ENCODE measurements at regions of chr11 and their contacts with region 1.

Region 1: GRCh38 chr11:9003573-9004309 is at the start of gene NRIP3:
- DNase-seq: peak; percentile 52 to 90 (median 78)
- ATAC-seq: peak; percentile 79 to 92 (median 83)
- H3K4me3 ChIP-seq: peak within 1 kb of the TSS; percentile 44 to 49
- H3K4me3 Mint-ChIP-seq: peak within 1 kb of the TSS; percentile 71 to 82 (median 79)
- H3K27ac ChIP-seq: no peak within 1 kb of the TSS
- H3K27ac Mint-ChIP-seq: no peak within 1 kb of the TSS
- H3K4me1 ChIP-seq: peaks cover 4 to 21% of the 10 kb centered on the region in 2 experiments
- H3K4me1 Mint-ChIP-seq: peaks cover 21 to 30% (median 24%) of the 10 kb centered on the region in 3 donors
- H3K27me3 ChIP-seq: peaks cover 0 to 29% of the 10 kb centered on the region in 2 experiments
- H3K27me3 Mint-ChIP-seq: peaks cover 31 to 35% of the 10 kb centered on the region in 2 donors
- total RNA-seq, gene NRIP3: 0.89 to 3.9 (median 1.6) TPM

Region 2: DNA sequence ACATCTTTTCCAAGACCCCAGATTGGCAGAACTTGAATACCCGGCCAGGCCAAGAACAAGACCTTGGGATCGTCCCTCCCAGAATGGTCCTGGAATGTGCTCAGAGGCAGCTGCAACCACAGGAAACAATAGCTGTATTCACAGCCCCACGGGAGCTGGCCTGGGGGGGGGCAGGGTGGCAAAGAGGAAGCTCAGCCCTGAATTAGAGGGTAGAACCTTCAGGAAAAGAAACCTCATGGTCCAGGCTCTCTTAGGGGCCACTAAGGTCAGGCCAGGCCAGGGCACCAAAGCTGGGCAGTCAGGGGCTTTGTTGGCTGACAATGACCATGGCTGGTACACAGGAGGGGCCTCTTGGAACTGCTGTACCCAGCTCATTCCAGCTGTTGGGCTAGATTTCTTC is 303.8 kb before region 1 on chr11:
- CTCF ChIA-PET with region 1: no interaction called
- POLR2A ChIA-PET with region 1: no interaction called
- DNase-seq: no peak
- ATAC-seq: no peak
- H3K4me3 ChIP-seq: no peak overlapping the region
- H3K4me3 Mint-ChIP-seq: no peak overlapping the region
- H3K27ac ChIP-seq: no peak overlapping the region
- H3K27ac Mint-ChIP-seq: no peak overlapping the region
- H3K4me1 ChIP-seq: no peaks in the 10 kb centered on the region
- H3K4me1 Mint-ChIP-seq: no peaks in the 10 kb centered on the region
- H3K27me3 ChIP-seq: peaks cover 0 to 2% of the 10 kb centered on the region in 2 experiments
- H3K27me3 Mint-ChIP-seq: no peaks in the 10 kb centered on the region

Region 3: DNA sequence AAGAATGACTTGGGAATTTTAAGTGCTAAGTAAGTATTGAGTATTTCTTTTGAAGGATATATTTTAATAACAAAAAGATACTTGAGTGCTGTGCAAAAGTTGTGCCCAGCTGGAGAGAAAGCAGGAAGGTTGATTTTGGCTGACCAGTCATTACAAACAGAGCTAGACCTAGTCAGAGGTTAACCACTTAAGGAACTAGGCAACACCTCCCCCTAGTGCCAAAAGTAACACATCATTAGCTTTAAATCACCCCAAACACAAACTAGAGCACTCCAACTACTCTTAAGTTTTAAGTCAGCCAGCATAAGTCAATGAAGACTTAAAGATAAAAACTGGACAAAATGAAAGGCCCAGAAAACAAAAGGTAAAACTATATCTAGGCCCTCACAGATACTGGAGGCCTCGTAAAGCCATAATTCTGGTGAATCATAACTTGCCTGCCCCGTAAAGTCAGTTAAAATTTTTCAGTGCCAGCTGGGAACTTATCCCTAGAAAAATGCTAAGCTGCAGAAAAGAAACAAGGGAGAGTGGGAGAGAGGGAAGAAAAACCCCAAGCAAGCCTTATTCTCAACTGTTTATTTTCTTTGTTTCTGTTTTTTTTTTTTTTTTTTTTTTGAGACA is 44.1 kb before region 1 on chr11:
- CTCF ChIA-PET with region 1: interaction called in 1 of 2 experiments, 11 read pairs
- POLR2A ChIA-PET with region 1: no interaction called
- DNase-seq: peak in 7 of 35 experiments; percentile 6 to 64 (median 12)
- ATAC-seq: no peak
- H3K4me3 ChIP-seq: no peak overlapping the region
- H3K4me3 Mint-ChIP-seq: no peak overlapping the region
- H3K27ac ChIP-seq: no peak overlapping the region
- H3K27ac Mint-ChIP-seq: no peak overlapping the region
- H3K4me1 ChIP-seq: peaks cover 11 to 18% of the 10 kb centered on the region in 2 experiments
- H3K4me1 Mint-ChIP-seq: peaks cover 25 to 36% (median 34%) of the 10 kb centered on the region in 3 donors
- H3K27me3 ChIP-seq: no peaks in the 10 kb centered on the region
- H3K27me3 Mint-ChIP-seq: no peaks in the 10 kb centered on the region

Region 4: DNA sequence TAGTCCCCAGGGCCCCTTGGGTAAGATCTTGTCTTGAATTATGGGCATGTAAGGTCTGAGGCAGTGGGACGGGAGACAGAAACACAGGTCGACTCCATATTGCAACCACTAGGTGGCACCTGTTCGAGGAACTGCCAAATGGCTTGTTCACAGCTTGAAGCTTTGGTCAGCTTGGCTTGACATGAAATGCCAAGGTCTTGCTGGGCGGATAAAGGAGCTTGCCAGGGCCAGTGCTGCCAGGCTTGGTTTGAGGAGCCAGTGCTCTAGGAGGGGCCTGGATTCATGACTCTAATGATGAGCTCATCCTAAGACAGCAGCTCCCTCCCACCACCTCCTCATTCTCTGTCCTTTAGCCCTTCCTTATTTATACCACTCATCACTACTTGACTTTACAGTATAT is 11.9 kb after region 1 on chr11:
- CTCF ChIA-PET with region 1: interaction called, 6 to 10 read pairs
- POLR2A ChIA-PET with region 1: no interaction called
- DNase-seq: peak; percentile 14 to 77 (median 38)
- ATAC-seq: peak; percentile 72 to 86 (median 78)
- H3K4me3 ChIP-seq: no peak overlapping the region
- H3K4me3 Mint-ChIP-seq: no peak overlapping the region
- H3K27ac ChIP-seq: no peak overlapping the region
- H3K27ac Mint-ChIP-seq: no peak overlapping the region
- H3K4me1 ChIP-seq: peaks cover 0 to 11% of the 10 kb centered on the region in 2 experiments
- H3K4me1 Mint-ChIP-seq: peaks cover 17 to 25% (median 17%) of the 10 kb centered on the region in 3 donors
- H3K27me3 ChIP-seq: peaks cover 0 to 8% of the 10 kb centered on the region in 2 experiments
- H3K27me3 Mint-ChIP-seq: peaks cover 5 to 10% of the 10 kb centered on the region in 2 donors

Region 5: DNA sequence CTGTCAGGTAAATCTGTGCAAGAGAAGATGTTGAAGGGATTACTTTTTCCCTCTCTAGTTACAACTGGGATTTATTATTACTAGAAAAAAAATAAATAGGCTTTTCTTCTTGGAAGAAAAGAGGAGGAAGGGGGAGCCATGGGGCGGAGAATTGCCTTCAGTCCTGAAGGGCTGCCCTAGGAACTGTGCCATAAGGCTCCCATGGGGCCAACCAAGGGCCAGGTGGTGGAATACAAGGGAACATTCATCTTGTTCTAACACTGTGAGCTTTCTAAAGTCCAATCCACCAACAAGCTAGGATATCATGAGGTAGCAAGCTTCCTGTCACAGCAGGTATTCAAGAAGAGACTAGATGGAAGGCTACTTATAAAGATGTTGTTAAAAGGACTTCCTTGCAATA is 24.8 kb after region 1 on chr11:
- CTCF ChIA-PET with region 1: no interaction called
- POLR2A ChIA-PET with region 1: no interaction called
- DNase-seq: no peak
- ATAC-seq: no peak
- H3K4me3 ChIP-seq: no peak overlapping the region
- H3K4me3 Mint-ChIP-seq: no peak overlapping the region
- H3K27ac ChIP-seq: no peak overlapping the region
- H3K27ac Mint-ChIP-seq: no peak overlapping the region
- H3K4me1 ChIP-seq: no peaks in the 10 kb centered on the region
- H3K4me1 Mint-ChIP-seq: no peaks in the 10 kb centered on the region
- H3K27me3 ChIP-seq: peaks cover 0 to 15% of the 10 kb centered on the region in 2 experiments
- H3K27me3 Mint-ChIP-seq: peaks cover 2 to 12% of the 10 kb centered on the region in 2 donors

Measured in T-cell (primary cell).